ENCODE measurements at regions of chr11 and their contacts with region 1.

Region 1: DNA sequence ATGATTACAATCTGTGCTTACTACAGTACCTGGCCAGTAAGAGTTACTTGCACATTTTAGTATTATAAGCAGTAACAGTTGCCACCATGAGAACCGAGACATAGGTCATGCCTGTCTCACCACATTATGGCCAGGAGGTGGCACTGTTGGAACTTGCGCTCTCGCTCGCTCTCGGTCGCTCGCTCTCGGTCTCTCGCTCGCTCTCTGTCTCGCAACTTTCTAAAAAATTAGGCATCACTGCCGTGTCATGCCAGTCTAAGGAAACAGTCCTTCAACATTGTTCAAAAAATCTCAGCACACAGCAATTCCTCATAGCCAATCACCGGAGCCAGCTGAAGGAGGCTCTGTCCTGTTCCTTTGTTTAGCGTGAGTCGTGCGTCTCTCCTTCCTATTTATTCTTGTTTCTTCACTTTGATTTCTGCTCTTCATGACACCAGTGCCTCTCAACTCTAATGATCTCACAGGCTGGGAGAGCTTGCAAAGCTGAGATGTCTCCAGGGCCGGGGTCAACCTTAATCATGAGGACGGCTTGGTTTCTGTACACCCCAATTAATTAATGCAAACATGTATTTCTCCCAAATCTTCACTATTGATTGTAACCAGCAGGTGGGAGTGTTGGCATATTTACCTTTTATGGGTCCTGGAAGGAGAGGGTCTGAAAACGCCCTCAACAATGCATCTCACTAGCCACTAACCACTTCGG is 6.3 kb upstream of the ADAMTS8 start:
- DNase-seq: peak; percentile 96
- ATAC-seq: peak; percentile 76
- H3K4me3 ChIP-seq: peak overlapping the region; percentile 75
- H3K27ac ChIP-seq: peak overlapping the region; percentile 80
- H3K4me1 ChIP-seq: peaks cover 21% of the 10 kb centered on the region
- H3K27me3 ChIP-seq: peaks cover 11% of the 10 kb centered on the region
- CTCF ChIP-seq: peak; percentile 83

Region 2: GRCh38 chr11:130390071-130390758 is 44.5 kb before region 1 on chr11:
- CTCF ChIA-PET with region 1: interaction called, 5 read pairs
- POLR2A ChIA-PET with region 1: no interaction called
- intact Hi-C with region 1: loop called (anchors 1 kb)
- DNase-seq: peak; percentile 78
- ATAC-seq: peak; percentile 98
- H3K4me3 ChIP-seq: no peak overlapping the region
- H3K27ac ChIP-seq: no peak overlapping the region
- H3K4me1 ChIP-seq: peaks cover 10% of the 10 kb centered on the region
- H3K27me3 ChIP-seq: 0 out of 2 replicates have a peak, but pooled peaks cover 9% of the 10 kb centered on the region
- CTCF ChIP-seq: peak; percentile 90

Region 3: GRCh38 chr11:130499828-130500227 is 65.2 kb after region 1 on chr11:
- CTCF ChIA-PET with region 1: no interaction called
- POLR2A ChIA-PET with region 1: no interaction called
- intact Hi-C with region 1: no loop called
- DNase-seq: no peak
- ATAC-seq: no peak
- H3K4me3 ChIP-seq: no peak overlapping the region
- H3K27ac ChIP-seq: no peak overlapping the region
- H3K4me1 ChIP-seq: peaks cover 13% of the 10 kb centered on the region
- H3K27me3 ChIP-seq: no peaks in the 10 kb centered on the region
- CTCF ChIP-seq: no peak

Region 4: DNA sequence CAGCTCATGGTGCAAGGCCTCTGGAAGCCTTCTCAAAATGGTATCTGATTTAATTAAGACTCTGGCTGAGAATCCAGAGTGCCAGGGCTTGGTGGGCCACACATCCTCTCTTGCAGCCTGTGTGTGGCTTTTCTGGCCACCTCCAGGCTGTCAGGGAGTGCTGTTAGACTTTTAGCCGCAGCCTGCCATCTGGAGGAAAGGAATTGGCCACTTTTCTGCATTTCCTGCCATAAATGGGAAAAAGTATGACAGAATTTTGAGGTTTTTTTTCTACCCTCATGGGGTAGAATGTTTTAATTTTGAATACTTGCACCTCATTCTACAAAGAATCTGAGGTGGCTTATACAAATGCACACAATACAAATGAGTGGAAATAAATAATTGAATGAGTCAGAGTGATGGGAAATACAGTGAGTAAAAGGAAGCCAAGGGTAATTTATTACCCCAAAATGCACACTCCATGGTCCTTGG is 232.1 kb after region 1 on chr11:
- CTCF ChIA-PET with region 1: no interaction called
- POLR2A ChIA-PET with region 1: no interaction called
- intact Hi-C with region 1: loop called (anchors 1 kb)
- DNase-seq: peak; percentile 36
- ATAC-seq: peak; percentile 77
- H3K4me3 ChIP-seq: no peak overlapping the region
- H3K27ac ChIP-seq: peak overlapping the region; percentile 9; the same call in 1 of the 2 replicates
- H3K4me1 ChIP-seq: peaks cover 9% of the 10 kb centered on the region
- H3K27me3 ChIP-seq: no peaks in the 10 kb centered on the region
- CTCF ChIP-seq: peak; percentile 36

Region 5: DNA sequence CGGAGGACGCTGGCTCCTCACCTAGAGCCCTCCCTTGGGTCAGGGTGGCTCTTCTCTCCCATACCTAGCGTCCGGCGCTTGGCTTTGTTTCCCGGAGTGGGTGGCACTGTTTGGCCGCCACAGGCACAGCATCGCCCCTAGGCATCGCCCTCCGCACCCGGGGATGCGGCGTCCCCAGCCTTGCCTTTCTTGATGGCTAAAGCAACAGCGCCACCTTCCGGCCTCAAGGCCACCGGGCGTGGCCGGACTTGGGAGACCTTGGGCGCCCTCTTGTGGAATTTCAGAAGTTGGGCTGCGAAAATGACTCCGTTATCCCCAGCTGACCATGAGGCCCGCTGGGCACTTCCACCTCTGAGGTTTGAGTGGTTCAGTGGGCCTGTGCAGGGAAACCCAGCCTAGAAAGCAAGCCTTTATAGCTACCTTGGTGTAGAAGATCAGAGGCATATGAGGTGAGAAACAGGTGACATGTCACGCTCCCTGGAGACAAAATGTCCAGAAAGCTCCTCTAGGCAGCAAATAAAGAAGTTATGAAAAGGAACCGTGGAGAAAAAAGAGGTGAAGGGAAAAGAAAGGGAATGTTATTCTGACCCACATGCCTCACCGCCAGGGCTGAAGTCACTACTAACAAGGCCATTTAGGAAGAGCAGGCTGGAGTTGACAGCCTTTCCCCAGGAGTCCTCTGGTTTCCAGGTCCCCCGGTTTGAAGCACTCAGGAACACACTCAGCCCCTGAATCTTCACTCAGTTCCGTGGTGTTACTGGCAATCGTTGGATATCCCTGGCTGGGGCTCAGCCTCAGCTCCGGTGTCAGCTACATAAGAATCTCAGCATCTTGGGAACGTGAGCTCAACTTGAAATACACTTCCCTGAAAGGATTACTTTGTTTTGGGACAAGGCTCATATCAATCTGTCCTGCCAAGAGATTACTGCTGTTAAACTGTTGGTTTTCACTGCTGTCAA is 427.5 kb after region 1 on chr11:
- CTCF ChIA-PET with region 1: interaction called, 16 read pairs
- POLR2A ChIA-PET with region 1: no interaction called
- intact Hi-C with region 1: loop called (anchors 1 kb)
- DNase-seq: peak; percentile 97
- ATAC-seq: peak; percentile 85
- H3K4me3 ChIP-seq: no peak overlapping the region
- H3K27ac ChIP-seq: peak overlapping the region; percentile 23
- H3K4me1 ChIP-seq: peaks cover 4% of the 10 kb centered on the region
- H3K27me3 ChIP-seq: no peaks in the 10 kb centered on the region
- CTCF ChIP-seq: peak; percentile 100

Region 6: GRCh38 chr11:130894322-130895025 is 459.8 kb after region 1 on chr11:
- CTCF ChIA-PET with region 1: interaction called, 12 read pairs
- POLR2A ChIA-PET with region 1: no interaction called
- intact Hi-C with region 1: loop called (anchors 1 kb)
- DNase-seq: peak; percentile 85
- ATAC-seq: peak; percentile 78
- H3K4me3 ChIP-seq: no peak overlapping the region
- H3K27ac ChIP-seq: no peak overlapping the region
- H3K4me1 ChIP-seq: peaks cover 30% of the 10 kb centered on the region
- H3K27me3 ChIP-seq: no peaks in the 10 kb centered on the region
- CTCF ChIP-seq: peak; percentile 97

Measured in PC-3 (cell line).